ENCODE measurements at regions of chr2 and their contacts with region 1.

Region 1: DNA sequence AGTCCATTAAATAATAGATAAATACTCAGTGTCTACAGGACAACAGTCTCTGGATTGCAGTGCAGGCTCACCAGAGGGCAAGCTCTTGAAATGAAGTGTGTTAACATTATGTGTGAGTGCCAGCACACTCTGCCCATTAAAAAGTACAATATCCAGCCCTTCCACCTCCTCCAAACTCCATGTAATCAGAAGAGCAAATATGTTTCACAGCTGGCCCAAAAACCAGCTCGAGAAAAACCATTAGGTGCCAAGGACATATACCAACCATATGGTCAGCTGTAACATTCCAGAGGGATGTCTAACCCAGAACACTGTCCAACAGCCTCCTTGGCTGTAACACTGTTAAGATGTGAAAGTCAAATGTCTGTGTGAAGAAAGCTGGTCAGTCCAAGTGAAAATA is 112.2 kb downstream of the ZNF385B start:
- DNase-seq: no peak
- ATAC-seq: no peak
- H3K4me3 ChIP-seq: no peak overlapping the region
- H3K4me1 ChIP-seq: no peaks in the 10 kb centered on the region
- CTCF ChIP-seq: no peak

Region 2: GRCh38 chr2:179422037-179422643 is 327.1 kb before region 1 on chr2:
- intact Hi-C with region 1: loop called in 1 of 2 experiments (anchors 10 kb)
- DNase-seq: peak in 2 of 3 donors; percentile 75 to 89
- ATAC-seq: peak; percentile 55
- H3K4me3 ChIP-seq: no peak overlapping the region
- H3K4me1 ChIP-seq: no peaks in the 10 kb centered on the region
- CTCF ChIP-seq: peak; percentile 46

Region 3: GRCh38 chr2:179917272-179917671 is 168.1 kb after region 1 on chr2:
- intact Hi-C with region 1: no loop called
- DNase-seq: no peak
- ATAC-seq: no peak
- H3K4me3 ChIP-seq: no peak overlapping the region
- H3K4me1 ChIP-seq: no peaks in the 10 kb centered on the region
- CTCF ChIP-seq: no peak

Region 4: DNA sequence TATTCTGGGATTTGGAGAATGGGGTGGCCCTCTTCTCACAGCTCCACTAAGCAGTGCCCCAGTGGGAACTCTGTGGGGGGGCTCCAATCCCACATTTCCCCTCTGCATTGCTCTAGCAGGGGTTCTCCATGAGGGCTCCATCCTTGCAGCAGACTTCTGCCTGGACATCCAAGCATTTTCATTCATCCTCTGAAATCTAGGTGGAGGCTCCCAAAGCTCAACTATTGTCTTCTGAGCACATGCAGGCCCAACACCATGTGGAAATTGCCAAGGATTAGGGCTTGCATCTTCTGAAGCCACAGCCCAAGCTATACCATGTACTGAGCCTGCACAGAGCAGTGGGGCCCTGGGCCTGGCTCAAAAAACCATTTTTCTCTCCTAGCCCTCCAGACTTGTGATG is 420.3 kb after region 1 on chr2:
- intact Hi-C with region 1: no loop called
- DNase-seq: no peak
- ATAC-seq: no peak
- H3K4me3 ChIP-seq: no peak overlapping the region
- H3K4me1 ChIP-seq: no peaks in the 10 kb centered on the region
- CTCF ChIP-seq: no peak

Region 5: DNA sequence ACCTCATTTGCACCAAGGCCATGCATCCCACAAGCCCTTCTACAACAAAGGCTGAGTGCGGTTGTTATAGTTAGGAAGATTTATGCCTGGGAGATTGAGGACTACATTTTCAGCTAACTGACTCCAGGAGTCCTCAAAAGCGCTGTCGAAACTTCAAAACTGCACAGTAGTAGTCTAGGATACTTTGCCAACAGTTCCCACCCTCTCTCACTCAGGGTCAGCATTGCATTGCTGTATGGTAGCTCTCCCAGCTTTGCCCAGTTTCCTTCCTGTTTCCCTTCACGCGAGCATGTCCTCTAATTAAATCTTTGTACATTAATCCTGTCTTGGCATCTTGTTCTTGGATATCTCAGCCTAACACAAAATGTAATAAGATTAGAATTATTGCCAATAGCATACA is 810.6 kb after region 1 on chr2:
- intact Hi-C with region 1: no loop called
- DNase-seq: no peak
- ATAC-seq: no peak
- H3K4me3 ChIP-seq: no peak overlapping the region
- H3K4me1 ChIP-seq: no peaks in the 10 kb centered on the region
- CTCF ChIP-seq: no peak